Activated B cell treated with CpG ODN at 0.5 μM for 24 hours (primary cell): ENCODE measurements at regions of chr1 and their contacts with region 1.

Region 1: GRCh38 chr1:158329733-158330132 is 1.6 kb downstream of the CD1B start:
- DNase-seq: no peak
- ATAC-seq: peak; percentile 47
- H3K4me3 Mint-ChIP-seq: no peak overlapping the region
- H3K27ac Mint-ChIP-seq: no peak overlapping the region
- H3K4me1 Mint-ChIP-seq: peaks cover 26% of the 10 kb centered on the region
- H3K27me3 Mint-ChIP-seq: no peaks in the 10 kb centered on the region
- CTCF ChIP-seq: no peak

Region 2: DNA sequence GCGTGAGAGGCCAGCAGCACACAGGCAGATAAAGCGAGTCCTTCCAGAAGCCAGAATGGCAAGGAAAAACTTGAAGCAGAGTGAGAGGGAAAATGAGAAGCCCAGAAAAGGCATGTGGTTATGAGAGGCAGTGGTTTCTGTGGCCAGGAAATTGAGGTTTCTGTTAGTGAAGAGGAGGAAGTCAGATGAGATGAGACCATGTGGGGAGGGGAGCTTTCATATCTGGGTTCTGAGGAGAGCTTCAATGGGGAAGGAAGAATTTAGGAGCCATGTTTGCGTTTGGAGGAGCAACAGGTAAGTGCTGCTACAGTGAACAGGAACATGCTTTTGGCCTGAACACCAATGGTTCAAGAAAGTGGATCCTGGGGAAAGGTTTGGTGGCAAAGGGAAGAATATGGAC is 81.6 kb before region 1 on chr1:
- CTCF ChIA-PET with region 1: interaction called, 68 read pairs
- POLR2A ChIA-PET with region 1: interaction called, 3 read pairs
- intact Hi-C with region 1: loop called (anchors 1 kb)
- DNase-seq: peak; percentile 32
- ATAC-seq: peak; percentile 83
- H3K4me3 Mint-ChIP-seq: peak overlapping the region; percentile 26
- H3K27ac Mint-ChIP-seq: peak overlapping the region; percentile 59
- H3K4me1 Mint-ChIP-seq: peaks cover 51% of the 10 kb centered on the region
- H3K27me3 Mint-ChIP-seq: no peaks in the 10 kb centered on the region
- CTCF ChIP-seq: no peak

Region 3: DNA sequence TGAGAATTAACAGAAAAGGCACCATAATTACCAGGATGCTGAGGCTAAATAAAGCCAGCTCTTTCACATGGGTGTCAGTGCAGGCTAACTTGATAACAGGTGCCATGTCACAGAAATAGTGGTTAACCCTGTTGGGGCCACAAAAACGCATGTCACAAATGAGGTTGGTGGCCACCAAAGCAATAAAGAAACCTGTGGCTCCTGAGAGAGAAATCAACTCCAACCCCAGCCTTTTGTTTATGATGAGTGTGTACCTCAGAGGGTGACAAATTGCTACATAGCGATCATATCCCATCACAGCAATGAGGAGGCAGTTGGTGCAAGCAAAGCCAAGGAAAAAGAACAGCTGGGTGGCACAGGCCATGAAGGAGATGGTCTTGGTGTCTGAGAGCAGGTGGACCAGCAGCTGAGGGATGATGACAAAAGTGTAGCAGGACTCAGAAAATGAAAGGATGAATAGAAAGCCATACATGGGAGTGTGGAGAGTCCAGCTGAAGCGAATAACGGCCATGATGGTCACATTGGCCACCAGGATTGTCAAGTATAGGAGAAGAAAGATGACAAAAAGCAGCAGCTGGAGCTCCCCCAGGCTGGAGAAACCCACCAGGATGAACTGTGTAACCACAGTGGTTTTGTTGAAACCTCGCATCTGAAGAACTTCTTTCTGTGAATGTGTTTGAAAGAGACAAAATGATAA is 69.2 kb after region 1 on chr1 and contains the start of gene OR10T2:
- CTCF ChIA-PET with region 1: interaction called, 8 read pairs
- POLR2A ChIA-PET with region 1: no interaction called
- intact Hi-C with region 1: loop called (anchors 5 kb)
- DNase-seq: no peak
- ATAC-seq: no peak
- H3K4me3 Mint-ChIP-seq: no peak within 1 kb of the TSS
- H3K27ac Mint-ChIP-seq: no peak within 1 kb of the TSS
- H3K4me1 Mint-ChIP-seq: peaks cover 12% of the 10 kb centered on the region
- H3K27me3 Mint-ChIP-seq: no peaks in the 10 kb centered on the region
- CTCF ChIP-seq: no peak
- total RNA-seq, gene OR10T2: not detected in 2 replicates